ENCODE measurements at regions of chr1 and their contacts with region 1.

Region 1: DNA sequence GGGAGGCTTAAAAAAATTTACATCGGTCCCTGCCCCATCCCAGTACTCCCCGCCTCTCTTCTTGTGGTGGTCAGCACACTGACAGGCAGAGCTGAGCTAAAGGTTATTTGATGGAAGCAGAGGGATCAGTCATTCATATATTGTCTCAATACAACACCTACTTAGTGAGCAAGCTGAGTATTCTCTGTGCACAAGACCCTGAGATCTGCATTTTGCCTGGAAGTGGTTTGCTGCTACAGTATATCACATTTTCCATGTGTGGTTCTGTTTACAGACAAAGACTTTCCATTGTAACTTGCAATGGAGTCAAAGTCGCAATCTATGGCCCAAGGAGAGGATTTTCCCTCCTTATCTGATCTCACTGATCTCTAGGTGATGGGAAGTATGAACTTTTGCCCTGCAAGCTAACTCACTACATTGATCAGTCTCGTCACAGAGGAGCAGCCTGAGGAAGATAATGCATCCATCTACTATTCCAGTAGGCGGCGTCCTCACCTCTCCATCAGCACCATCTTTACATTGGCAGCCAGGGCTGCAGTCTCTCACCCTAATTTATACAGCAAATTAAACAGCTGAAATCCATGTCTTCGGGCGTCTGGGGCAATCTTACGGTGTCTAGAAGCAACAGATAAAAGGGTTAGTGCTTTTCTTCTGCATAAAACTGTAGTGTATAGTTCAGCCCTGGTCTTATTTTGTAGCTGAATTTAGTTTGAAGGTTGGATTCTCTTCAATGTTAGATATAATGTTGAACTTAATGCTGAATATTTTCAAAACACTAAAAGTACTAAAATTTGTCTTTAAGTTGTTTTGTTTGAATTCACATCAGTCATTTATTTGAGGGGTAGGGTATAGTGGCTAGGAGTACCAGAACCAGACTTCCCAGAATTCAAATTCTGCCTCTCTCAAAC is 3.2 kb upstream of the TRAF5 start:
- DNase-seq: peak; percentile 81
- H3K4me3 Mint-ChIP-seq: no peak overlapping the region
- H3K27ac Mint-ChIP-seq: no peak overlapping the region
- H3K4me1 Mint-ChIP-seq: peaks cover 44% of the 10 kb centered on the region
- H3K27me3 Mint-ChIP-seq: no peaks in the 10 kb centered on the region

Region 2: GRCh38 chr1:211339631-211340041 is 16.2 kb after region 1 on chr1:
- CTCF ChIA-PET with region 1: interaction called, 37 read pairs
- POLR2A ChIA-PET with region 1: interaction called, 3 read pairs
- DNase-seq: no peak
- H3K4me3 Mint-ChIP-seq: no peak overlapping the region
- H3K27ac Mint-ChIP-seq: peak overlapping the region; percentile 83
- H3K4me1 Mint-ChIP-seq: peaks cover 84% of the 10 kb centered on the region
- H3K27me3 Mint-ChIP-seq: no peaks in the 10 kb centered on the region

Region 3: GRCh38 chr1:211356723-211357407 is 33.5 kb after region 1 on chr1:
- CTCF ChIA-PET with region 1: interaction called, 17 read pairs
- POLR2A ChIA-PET with region 1: no interaction called
- DNase-seq: no peak
- H3K4me3 Mint-ChIP-seq: no peak overlapping the region
- H3K27ac Mint-ChIP-seq: no peak overlapping the region
- H3K4me1 Mint-ChIP-seq: peaks cover 42% of the 10 kb centered on the region
- H3K27me3 Mint-ChIP-seq: no peaks in the 10 kb centered on the region

Region 4: DNA sequence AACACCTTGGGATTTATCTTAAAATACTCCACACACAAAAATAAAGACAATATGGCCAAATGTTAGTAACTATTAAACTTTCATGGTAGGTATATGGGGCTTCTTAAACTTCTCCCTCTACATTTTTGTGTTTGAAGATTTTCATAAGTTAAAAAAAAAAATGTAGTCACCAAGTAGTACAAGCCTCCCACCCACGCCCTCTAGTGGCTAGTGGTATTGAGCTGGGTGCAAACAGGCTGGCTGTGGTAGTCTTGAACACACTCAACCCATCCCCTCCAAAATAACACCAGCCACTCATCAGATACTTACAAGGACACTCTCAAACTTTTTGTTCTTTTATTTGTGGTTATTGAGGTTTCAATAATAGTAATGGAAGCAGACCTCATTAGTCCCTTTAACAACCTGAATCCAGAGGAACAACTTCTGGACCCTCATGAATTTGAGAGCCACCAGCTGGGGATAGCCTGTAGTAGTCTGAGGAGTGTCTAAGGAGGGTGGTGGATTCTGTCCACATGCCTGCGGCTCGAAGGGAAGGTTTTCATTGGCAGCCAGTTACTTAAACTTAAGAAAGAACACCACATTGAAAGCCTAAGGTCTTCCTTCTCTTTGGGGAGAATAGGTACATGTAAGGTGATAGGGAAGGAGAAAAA is 152.9 kb after region 1 on chr1:
- CTCF ChIA-PET with region 1: interaction called, 21 read pairs
- POLR2A ChIA-PET with region 1: no interaction called
- DNase-seq: peak; percentile 89
- H3K4me3 Mint-ChIP-seq: no peak overlapping the region
- H3K27ac Mint-ChIP-seq: no peak overlapping the region
- H3K4me1 Mint-ChIP-seq: no peaks in the 10 kb centered on the region
- H3K27me3 Mint-ChIP-seq: peaks cover 29% of the 10 kb centered on the region

Region 5: GRCh38 chr1:211514030-211514754 is 190.8 kb after region 1 on chr1:
- CTCF ChIA-PET with region 1: interaction called, 21 read pairs
- POLR2A ChIA-PET with region 1: no interaction called
- DNase-seq: peak; percentile 80
- H3K4me3 Mint-ChIP-seq: peak overlapping the region; percentile 25
- H3K27ac Mint-ChIP-seq: no peak overlapping the region
- H3K4me1 Mint-ChIP-seq: peaks cover 43% of the 10 kb centered on the region
- H3K27me3 Mint-ChIP-seq: no peaks in the 10 kb centered on the region